ENCODE measurements at regions of chr1 and their contacts with region 1.

Region 1: DNA sequence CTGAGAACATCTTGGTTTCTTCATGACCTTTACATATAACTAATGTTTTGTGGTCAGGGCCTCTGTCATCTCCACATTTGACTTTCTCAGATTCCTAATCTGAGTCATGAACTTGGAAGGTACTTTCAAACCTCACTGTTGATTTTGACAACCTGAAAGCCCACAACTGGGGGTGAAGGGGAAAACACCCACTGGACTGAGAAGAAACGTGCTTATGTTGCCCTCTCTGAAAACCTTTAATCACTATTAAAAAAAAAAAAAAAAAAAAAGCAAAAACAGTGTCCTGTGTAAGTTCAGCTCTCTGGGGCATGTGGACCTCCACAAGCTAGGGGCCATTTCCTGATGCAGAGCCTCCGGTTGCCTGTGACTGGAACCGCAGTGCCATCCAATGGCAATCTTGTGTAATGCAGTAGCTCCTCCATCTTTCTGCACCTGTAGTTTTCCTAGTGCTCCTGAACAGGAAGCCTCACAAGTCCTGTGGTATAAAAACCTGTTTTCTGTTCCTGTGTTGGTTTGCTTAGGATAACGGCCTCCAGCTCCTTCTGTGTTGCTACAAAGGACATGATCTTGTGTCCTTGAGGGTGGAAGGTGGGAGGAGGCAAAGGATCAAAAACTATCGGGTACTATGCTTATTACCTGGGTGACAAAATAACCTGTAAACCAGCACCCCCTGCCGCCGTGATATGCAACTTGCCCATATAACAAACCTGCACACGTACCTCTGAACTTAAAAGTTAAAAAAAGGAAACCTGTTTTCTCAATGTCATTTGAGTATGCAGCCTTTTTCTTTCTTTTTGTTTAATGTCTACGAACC is 124.5 kb downstream of the ZNF648 start:
- DNase-seq: peak; percentile 80
- ATAC-seq: peak; percentile 99
- H3K4me3 Mint-ChIP-seq: peak overlapping the region; percentile 37; the same call in 1 of the 2 replicates
- H3K27ac Mint-ChIP-seq: no peak overlapping the region
- H3K4me1 Mint-ChIP-seq: no peaks in the 10 kb centered on the region
- H3K27me3 Mint-ChIP-seq: no peaks in the 10 kb centered on the region
- CTCF ChIP-seq: peak; percentile 72; the same call in 1 of the 2 replicates

Region 2: GRCh38 chr1:181676269-181676668 is 260.7 kb before region 1 on chr1:
- CTCF ChIA-PET with region 1: interaction called, 15 read pairs
- POLR2A ChIA-PET with region 1: no interaction called
- DNase-seq: peak; percentile 32
- ATAC-seq: peak; percentile 81
- H3K4me3 Mint-ChIP-seq: no peak overlapping the region
- H3K27ac Mint-ChIP-seq: no peak overlapping the region
- H3K4me1 Mint-ChIP-seq: peaks cover 4% of the 10 kb centered on the region; the same call in 1 of the 2 replicates
- H3K27me3 Mint-ChIP-seq: no peaks in the 10 kb centered on the region
- CTCF ChIP-seq: no peak

Region 3: DNA sequence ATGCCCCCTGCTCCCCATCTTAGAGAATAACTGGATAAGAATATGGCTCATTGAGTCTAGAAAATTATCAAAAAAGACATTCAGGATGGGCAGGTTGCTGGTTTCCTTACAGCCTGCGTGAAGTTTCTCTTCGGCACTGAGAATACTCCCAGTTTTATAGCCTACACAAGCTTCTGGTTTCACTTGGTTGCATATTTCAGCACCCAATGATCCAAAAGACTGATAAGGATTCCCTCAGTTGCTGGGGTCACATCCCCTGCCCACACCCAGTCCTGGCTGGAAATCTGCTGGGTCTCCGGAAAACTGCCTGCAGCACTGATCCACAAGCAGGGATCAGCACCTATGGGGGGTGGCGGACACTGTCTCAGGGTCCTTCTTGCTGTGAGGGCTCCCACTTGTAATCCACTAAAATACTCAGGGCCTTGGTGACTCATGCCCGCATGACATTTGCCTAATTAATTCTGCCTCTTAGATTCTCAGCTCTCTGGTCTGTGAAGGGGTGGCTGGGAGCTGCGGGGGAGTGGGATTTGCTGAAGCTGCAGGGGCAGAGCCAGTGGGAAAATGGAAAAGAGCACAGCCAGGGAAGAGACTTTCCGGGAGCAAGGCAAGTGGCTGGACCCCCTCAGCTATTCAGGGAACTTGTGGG is 18.0 kb before region 1 on chr1:
- CTCF ChIA-PET with region 1: interaction called, 13 read pairs
- POLR2A ChIA-PET with region 1: interaction called, 4 read pairs
- DNase-seq: peak; percentile 23
- ATAC-seq: peak; percentile 83
- H3K4me3 Mint-ChIP-seq: no peak overlapping the region
- H3K27ac Mint-ChIP-seq: no peak overlapping the region; the same call in 1 of the 2 replicates
- H3K4me1 Mint-ChIP-seq: peaks cover 8% of the 10 kb centered on the region
- H3K27me3 Mint-ChIP-seq: no peaks in the 10 kb centered on the region; the same call in none of the 2 replicates
- CTCF ChIP-seq: no peak

Region 4: GRCh38 chr1:182003953-182004586 is 67.1 kb after region 1 on chr1:
- CTCF ChIA-PET with region 1: interaction called, 15 read pairs
- POLR2A ChIA-PET with region 1: no interaction called
- DNase-seq: peak; percentile 40
- ATAC-seq: peak; percentile 89
- H3K4me3 Mint-ChIP-seq: no peak overlapping the region
- H3K27ac Mint-ChIP-seq: no peak overlapping the region
- H3K4me1 Mint-ChIP-seq: peaks cover 24% of the 10 kb centered on the region
- H3K27me3 Mint-ChIP-seq: no peaks in the 10 kb centered on the region; the same call in 1 of the 2 replicates
- CTCF ChIP-seq: no peak

Region 5: GRCh38 chr1:182041615-182042014 is 104.6 kb after region 1 on chr1:
- CTCF ChIA-PET with region 1: no interaction called
- POLR2A ChIA-PET with region 1: no interaction called
- DNase-seq: no peak
- ATAC-seq: no peak
- H3K4me3 Mint-ChIP-seq: no peak overlapping the region
- H3K27ac Mint-ChIP-seq: no peak overlapping the region
- H3K4me1 Mint-ChIP-seq: no peaks in the 10 kb centered on the region
- H3K27me3 Mint-ChIP-seq: no peaks in the 10 kb centered on the region; the same call in 1 of the 2 replicates
- CTCF ChIP-seq: no peak

Measured in WTC11 (cell line).